H1 (cell line): ENCODE measurements at regions of chr18 and their contacts with region 1.

Region 1: GRCh38 chr18:80200171-80200931 is 47.0 kb downstream of the PARD6G start:
- DNase-seq: peak in 1 of 2 experiments; percentile 54
- H3K4me3 ChIP-seq: no peak overlapping the region
- H3K27ac ChIP-seq: no peak overlapping the region
- H3K4me1 ChIP-seq: peaks cover 2 to 25% (median 7%) of the 10 kb centered on the region in 4 experiments; a peak in 6 of 7 replicates
- H3K27me3 ChIP-seq: no peaks in the 10 kb centered on the region
- CTCF ChIP-seq: peak; percentile 43 to 63 (median 59)
- EP300 ChIP-seq: no peak
- POLR2A ChIP-seq: no peak
- RAD21 ChIP-seq: peak; percentile 58 to 70

Region 2: GRCh38 chr18:80157708-80158343 is 42.5 kb before region 1 on chr18:
- CTCF ChIA-PET with region 1: interaction called, 33 read pairs
- POLR2A ChIA-PET with region 1: interaction called, 3 read pairs
- DNase-seq: peak in 1 of 2 experiments; percentile 85
- H3K4me3 ChIP-seq: no peak overlapping the region
- H3K27ac ChIP-seq: no peak overlapping the region
- H3K4me1 ChIP-seq: no peaks in the 10 kb centered on the region
- H3K27me3 ChIP-seq: no peaks in the 10 kb centered on the region
- CTCF ChIP-seq: peak; percentile 77 to 93 (median 89)
- EP300 ChIP-seq: no peak
- POLR2A ChIP-seq: no peak
- RAD21 ChIP-seq: peak; percentile 83 to 84

Region 3: GRCh38 chr18:80179857-80180551 is 20.3 kb before region 1 on chr18:
- CTCF ChIA-PET with region 1: interaction called, 27 read pairs
- POLR2A ChIA-PET with region 1: interaction called, 6 read pairs
- DNase-seq: no peak
- H3K4me3 ChIP-seq: no peak overlapping the region
- H3K27ac ChIP-seq: no peak overlapping the region
- H3K4me1 ChIP-seq: peaks cover 0 to 10% (median 3%) of the 10 kb centered on the region in 4 experiments; a peak in 5 of 7 replicates
- H3K27me3 ChIP-seq: no peaks in the 10 kb centered on the region
- CTCF ChIP-seq: no peak
- EP300 ChIP-seq: no peak
- POLR2A ChIP-seq: no peak
- RAD21 ChIP-seq: no peak

Region 4: GRCh38 chr18:80223581-80224148 is 23.3 kb after region 1 on chr18:
- CTCF ChIA-PET with region 1: interaction called, 14 read pairs
- POLR2A ChIA-PET with region 1: interaction called, 4 read pairs
- DNase-seq: no peak
- H3K4me3 ChIP-seq: no peak overlapping the region
- H3K27ac ChIP-seq: no peak overlapping the region
- H3K4me1 ChIP-seq: peaks cover 1 to 6% (median 4%) of the 10 kb centered on the region in 4 experiments; a peak in 6 of 7 replicates
- H3K27me3 ChIP-seq: no peaks in the 10 kb centered on the region
- CTCF ChIP-seq: no peak
- EP300 ChIP-seq: no peak
- POLR2A ChIP-seq: no peak
- RAD21 ChIP-seq: no peak

Region 5: DNA sequence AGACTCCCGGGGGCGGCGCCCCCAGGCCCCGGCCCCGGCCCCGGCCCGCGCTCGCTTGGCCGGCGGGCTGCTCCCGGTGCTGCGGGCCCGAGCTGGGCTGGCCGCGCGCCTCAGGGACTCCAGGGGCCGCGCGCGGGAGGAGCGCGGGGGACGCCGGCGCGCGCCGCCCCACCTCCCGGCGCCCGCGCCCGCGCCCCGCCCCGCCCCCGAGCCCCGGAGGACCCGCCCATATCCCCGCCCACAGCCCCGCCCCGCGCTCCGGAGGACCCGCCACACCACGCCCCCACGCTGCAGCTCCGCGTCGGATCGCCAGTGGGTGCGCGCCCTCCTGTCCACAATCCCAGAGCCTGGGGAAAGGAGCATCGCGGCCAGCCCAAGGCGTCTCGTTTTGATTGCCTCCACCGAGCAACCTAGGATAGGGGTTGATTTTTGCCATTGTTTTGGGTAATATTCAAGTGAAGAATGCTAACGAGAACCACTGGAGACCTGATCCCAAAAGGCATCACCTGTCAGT is 47.1 kb after region 1 on chr18 and contains the start of gene PARD6G:
- CTCF ChIA-PET with region 1: interaction called, 70 read pairs
- POLR2A ChIA-PET with region 1: no interaction called
- DNase-seq: peak in 1 of 2 experiments; percentile 79
- H3K4me3 ChIP-seq: peak within 1 kb of the TSS; percentile 71 to 96 (median 75)
- H3K27ac ChIP-seq: no peak within 1 kb of the TSS
- H3K4me1 ChIP-seq: peaks cover 0 to 5% (median 0%) of the 10 kb centered on the region in 4 experiments; a peak in 1 of 7 replicates
- H3K27me3 ChIP-seq: no peaks in the 10 kb centered on the region; a peak in 2 of 7 replicates
- CTCF ChIP-seq: peak in 1 of 3 experiments; percentile 5; a peak in 1 of 4 replicates
- EP300 ChIP-seq: no peak
- POLR2A ChIP-seq: no peak
- RAD21 ChIP-seq: peak in 1 of 2 experiments; percentile 21; a peak in 1 of 4 replicates
- total RNA-seq, gene PARD6G: 17.9 and 18.8 TPM in 2 replicates